HEK293 (cell line): ENCODE measurements at regions of chr2 and their contacts with region 1.

Region 1: GRCh38 chr2:127453392-127454171 is 35.4 kb downstream of the PROC start:
- H3K4me3 ChIP-seq: no peak overlapping the region
- H3K27ac ChIP-seq: no peak overlapping the region
- H3K4me1 ChIP-seq: no peaks in the 10 kb centered on the region
- CTCF ChIP-seq: peak; percentile 80

Region 2: DNA sequence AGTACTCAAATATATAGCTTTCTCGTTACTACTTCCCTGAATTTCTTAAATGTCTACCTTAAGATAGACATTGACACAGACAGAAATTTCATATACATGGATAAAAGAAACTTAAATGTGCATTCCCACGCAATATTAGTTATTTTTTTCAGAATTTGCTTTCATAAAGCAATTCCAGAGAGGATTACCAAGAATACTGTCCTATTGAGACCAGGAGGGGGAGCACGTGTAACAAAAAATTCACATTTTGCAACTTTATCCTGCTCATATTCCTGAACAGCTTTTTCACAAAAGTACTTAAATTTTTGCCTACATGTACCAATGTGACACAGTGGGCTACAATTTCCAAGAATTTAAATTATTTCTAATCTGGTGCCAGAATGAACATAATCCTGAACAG is 128.9 kb before region 1 on chr2:
- CTCF ChIA-PET with region 1: interaction called, 22 read pairs
- POLR2A ChIA-PET with region 1: no interaction called
- H3K4me3 ChIP-seq: no peak overlapping the region
- H3K27ac ChIP-seq: no peak overlapping the region
- H3K4me1 ChIP-seq: no peaks in the 10 kb centered on the region
- CTCF ChIP-seq: no peak

Region 3: GRCh38 chr2:127576433-127577207 is 123.0 kb after region 1 on chr2:
- CTCF ChIA-PET with region 1: no interaction called
- POLR2A ChIA-PET with region 1: no interaction called
- H3K4me3 ChIP-seq: no peak overlapping the region
- H3K27ac ChIP-seq: no peak overlapping the region
- H3K4me1 ChIP-seq: no peaks in the 10 kb centered on the region
- CTCF ChIP-seq: no peak